OCI-LY7 (cell line): ENCODE measurements at regions of chr11 and their contacts with region 1.

Region 1: DNA sequence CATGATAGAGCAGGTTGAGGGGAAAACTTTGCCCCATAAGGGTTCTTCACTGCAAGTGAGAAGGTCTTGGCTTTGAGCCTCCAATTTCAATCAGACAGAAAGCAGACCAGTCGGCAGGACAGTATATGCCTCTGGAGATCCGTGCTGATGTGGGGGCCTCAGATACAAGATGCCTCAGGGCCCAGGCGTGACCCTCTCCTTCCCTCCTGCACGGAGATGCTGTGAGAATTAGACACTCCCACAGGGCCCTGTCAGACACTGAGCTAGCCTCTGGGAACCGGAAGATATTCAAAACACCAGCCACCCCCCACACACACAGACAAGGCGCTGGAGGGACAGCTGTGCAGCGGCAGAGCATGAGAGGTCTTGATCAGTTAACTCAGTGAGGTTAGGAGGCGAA is 4.5 kb upstream of the RNH1 start:
- DNase-seq: no peak
- H3K4me3 ChIP-seq: no peak overlapping the region
- H3K27ac ChIP-seq: no peak overlapping the region
- H3K4me1 ChIP-seq: peaks cover 8% of the 10 kb centered on the region
- CTCF ChIP-seq: no peak

Region 2: GRCh38 chr11:477052-477715 is 34.4 kb before region 1 on chr11:
- CTCF ChIA-PET with region 1: no interaction called
- POLR2A ChIA-PET with region 1: no interaction called
- intact Hi-C with region 1: no loop called
- DNase-seq: no peak
- H3K4me3 ChIP-seq: no peak overlapping the region
- H3K27ac ChIP-seq: no peak overlapping the region
- H3K4me1 ChIP-seq: no peaks in the 10 kb centered on the region
- CTCF ChIP-seq: no peak

Region 3: DNA sequence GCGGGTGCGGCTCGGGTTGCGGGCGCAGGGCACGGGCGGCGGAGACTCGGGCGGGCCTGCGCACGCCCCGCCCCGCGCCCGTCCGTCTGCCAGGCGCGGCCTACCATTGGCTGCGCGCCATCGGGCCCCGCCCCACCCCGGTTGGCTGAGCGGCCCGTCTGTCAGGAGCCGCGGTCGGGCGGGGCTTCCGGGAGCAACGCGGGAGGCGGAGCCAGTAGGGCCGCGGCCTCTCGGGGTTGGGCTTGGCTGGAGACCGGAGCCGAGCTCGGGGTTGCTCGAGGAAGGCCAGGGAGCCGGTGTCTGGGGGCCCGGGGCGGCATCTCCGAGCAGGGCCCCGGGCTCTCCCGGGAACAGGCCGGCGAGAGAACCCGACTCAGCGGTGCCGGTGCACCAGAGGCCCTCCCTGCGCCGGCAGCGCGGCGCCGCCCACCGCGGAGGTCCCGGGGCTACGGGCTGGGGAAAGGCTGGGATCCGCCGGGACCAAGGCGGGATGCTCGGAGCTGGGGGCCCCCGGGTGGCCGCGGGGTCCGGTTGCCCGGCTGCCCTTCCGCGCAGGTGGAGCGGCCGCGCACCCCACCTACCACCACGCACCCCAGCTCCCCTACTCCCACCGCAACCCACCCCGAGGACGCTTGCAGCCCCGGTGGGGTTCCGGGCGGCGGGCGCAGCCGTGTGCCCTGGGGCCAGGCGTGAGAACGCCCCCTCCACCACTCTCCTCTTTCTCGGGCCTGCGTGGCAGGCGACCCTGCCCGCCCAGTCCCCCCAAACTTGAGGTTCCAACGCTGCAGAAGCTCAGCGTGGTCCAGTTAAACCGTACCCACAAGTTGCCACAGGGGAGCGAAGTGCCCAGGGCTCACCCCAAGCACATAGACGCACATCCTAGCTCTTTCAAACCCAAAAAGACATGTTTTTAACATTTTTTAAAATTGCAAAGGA is 24.2 kb after region 1 on chr11 and contains the start of gene HRAS:
- CTCF ChIA-PET with region 1: interaction called, 11 read pairs
- POLR2A ChIA-PET with region 1: interaction called, 6 read pairs
- intact Hi-C with region 1: loop called (anchors 1 kb)
- DNase-seq: peak; percentile 97
- H3K4me3 ChIP-seq: peak within 1 kb of the TSS; percentile 94
- H3K27ac ChIP-seq: peak within 1 kb of the TSS; percentile 80
- H3K4me1 ChIP-seq: peaks cover 32% of the 10 kb centered on the region
- CTCF ChIP-seq: no peak
- total RNA-seq, gene HRAS: 53.0 and 67.8 TPM in 2 replicates

Region 4: GRCh38 chr11:597166-597725 is 85.7 kb after region 1 on chr11:
- CTCF ChIA-PET with region 1: no interaction called
- POLR2A ChIA-PET with region 1: no interaction called
- intact Hi-C with region 1: no loop called
- DNase-seq: no peak
- H3K4me3 ChIP-seq: no peak overlapping the region
- H3K27ac ChIP-seq: no peak overlapping the region
- H3K4me1 ChIP-seq: no peaks in the 10 kb centered on the region
- CTCF ChIP-seq: peak; percentile 48